Thyroid gland (tissue), 4 donors: ENCODE measurements at regions of chr2 and their contacts with region 1.

Region 1: GRCh38 chr2:102442967-102443828 is 20.2 kb downstream of the IL18RAP start:
- DNase-seq: peak; percentile 24 to 28
- H3K4me3 ChIP-seq: no peak overlapping the region
- H3K27ac ChIP-seq: no peak overlapping the region
- H3K4me1 ChIP-seq: no peaks in the 10 kb centered on the region
- H3K27me3 ChIP-seq: no peaks in the 10 kb centered on the region
- CTCF ChIP-seq: peak; percentile 48 to 77 (median 62)
- POLR2A ChIP-seq: no peak

Region 2: GRCh38 chr2:102251042-102251848 is 192.0 kb before region 1 on chr2:
- intact Hi-C with region 1: loop called (anchors 10 kb)
- DNase-seq: peak; percentile 50 to 69
- H3K4me3 ChIP-seq: peak overlapping the region in 2 of 3 donors; percentile 21 to 33
- H3K27ac ChIP-seq: peak overlapping the region in 1 of 3 donors; percentile 60
- H3K4me1 ChIP-seq: peaks cover 0 to 4% of the 10 kb centered on the region in 2 donors
- H3K27me3 ChIP-seq: no peaks in the 10 kb centered on the region
- CTCF ChIP-seq: peak in 5 of 6 experiments; percentile 30 to 71 (median 52)
- POLR2A ChIP-seq: no peak

Region 3: GRCh38 chr2:102788885-102789260 is 345.7 kb after region 1 on chr2:
- intact Hi-C with region 1: no loop called
- DNase-seq: no peak
- H3K4me3 ChIP-seq: no peak overlapping the region
- H3K27ac ChIP-seq: no peak overlapping the region
- H3K4me1 ChIP-seq: no peaks in the 10 kb centered on the region
- H3K27me3 ChIP-seq: no peaks in the 10 kb centered on the region
- CTCF ChIP-seq: no peak
- POLR2A ChIP-seq: no peak